B cell (primary cell): ENCODE measurements at regions of chr6 and their contacts with region 1.

Region 1: DNA sequence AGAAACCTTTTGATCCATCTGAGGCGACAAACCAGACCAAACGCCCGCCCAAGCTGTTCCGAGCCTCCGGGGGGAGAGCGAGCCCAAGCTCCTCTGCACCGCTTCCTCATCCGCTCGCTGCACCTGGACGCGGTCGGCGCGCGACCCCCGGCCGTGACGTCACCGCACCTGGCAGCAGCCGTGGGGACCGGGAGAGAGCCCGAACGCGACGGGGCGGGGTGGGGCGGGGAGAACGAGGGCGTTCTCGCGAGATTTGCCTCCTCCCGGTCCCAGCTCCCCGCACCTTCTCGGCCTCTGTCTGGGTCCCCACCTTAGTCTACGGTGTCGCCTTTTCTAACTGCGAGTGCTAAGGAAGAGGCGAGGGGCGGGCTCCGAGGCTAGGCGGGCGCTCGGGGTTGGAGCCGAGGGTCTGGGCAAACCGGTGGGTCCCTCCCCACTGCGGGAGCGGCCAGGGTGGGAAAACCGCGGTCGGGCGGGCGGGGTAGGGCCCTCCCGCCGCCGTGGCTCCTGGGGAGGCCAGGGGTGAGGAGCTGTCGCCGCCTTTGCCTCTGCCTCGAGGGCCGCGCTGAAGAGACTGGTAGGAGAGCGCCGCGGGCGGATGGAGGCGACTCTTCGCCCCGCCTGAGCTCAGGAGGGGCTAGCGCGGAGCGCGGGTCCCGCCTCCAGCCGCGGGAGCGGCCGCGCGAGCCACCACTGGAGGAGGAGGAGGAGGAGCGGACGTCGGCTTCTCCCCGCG is at the start of gene CD2AP:
- DNase-seq: peak; percentile 97
- ATAC-seq: peak; percentile 87
- H3K4me3 ChIP-seq: peak within 1 kb of the TSS; percentile 79 to 92 (median 91)
- H3K4me3 Mint-ChIP-seq: peak within 1 kb of the TSS; percentile 93
- H3K27ac ChIP-seq: peak within 1 kb of the TSS; percentile 94 to 97
- H3K27ac Mint-ChIP-seq: peak within 1 kb of the TSS; percentile 93
- H3K4me1 ChIP-seq: peaks cover 18 to 21% of the 10 kb centered on the region in 2 donors
- H3K4me1 Mint-ChIP-seq: peaks cover 35% of the 10 kb centered on the region
- H3K27me3 ChIP-seq: no peaks in the 10 kb centered on the region
- H3K27me3 Mint-ChIP-seq: no peaks in the 10 kb centered on the region
- CTCF ChIP-seq: no peak
- total RNA-seq, gene CD2AP: 43.3 and 46.9 TPM in 2 replicates

Region 2: DNA sequence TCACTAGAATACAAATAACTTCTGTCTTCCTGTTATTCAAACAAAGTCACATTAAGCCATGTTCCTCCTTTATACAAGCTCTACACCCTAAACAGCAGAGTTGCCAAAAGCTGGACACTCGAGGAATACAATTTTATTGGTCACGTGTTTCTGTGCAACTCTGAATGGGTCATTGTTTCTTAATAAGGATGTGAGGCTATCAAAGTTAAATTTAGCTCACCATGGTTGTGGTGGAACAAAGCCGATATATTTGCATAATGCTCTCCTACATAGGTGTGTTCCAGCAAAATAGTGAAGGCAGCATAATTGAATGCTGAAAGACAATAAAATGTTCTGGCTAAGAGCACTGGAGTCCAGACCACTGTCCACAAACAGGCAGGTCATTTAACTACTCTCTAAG is 36.9 kb before region 1 on chr6:
- CTCF ChIA-PET with region 1: interaction called, 4 read pairs
- POLR2A ChIA-PET with region 1: interaction called, 3 read pairs
- intact Hi-C with region 1: loop called (anchors 2 kb)
- DNase-seq: peak; percentile 53
- ATAC-seq: peak; percentile 37
- H3K4me3 ChIP-seq: no peak overlapping the region
- H3K4me3 Mint-ChIP-seq: peak overlapping the region; percentile 71
- H3K27ac ChIP-seq: no peak overlapping the region
- H3K27ac Mint-ChIP-seq: no peak overlapping the region
- H3K4me1 ChIP-seq: peaks cover 36 to 38% of the 10 kb centered on the region in 2 donors
- H3K4me1 Mint-ChIP-seq: peaks cover 40% of the 10 kb centered on the region
- H3K27me3 ChIP-seq: no peaks in the 10 kb centered on the region
- H3K27me3 Mint-ChIP-seq: no peaks in the 10 kb centered on the region
- CTCF ChIP-seq: no peak

Region 3: DNA sequence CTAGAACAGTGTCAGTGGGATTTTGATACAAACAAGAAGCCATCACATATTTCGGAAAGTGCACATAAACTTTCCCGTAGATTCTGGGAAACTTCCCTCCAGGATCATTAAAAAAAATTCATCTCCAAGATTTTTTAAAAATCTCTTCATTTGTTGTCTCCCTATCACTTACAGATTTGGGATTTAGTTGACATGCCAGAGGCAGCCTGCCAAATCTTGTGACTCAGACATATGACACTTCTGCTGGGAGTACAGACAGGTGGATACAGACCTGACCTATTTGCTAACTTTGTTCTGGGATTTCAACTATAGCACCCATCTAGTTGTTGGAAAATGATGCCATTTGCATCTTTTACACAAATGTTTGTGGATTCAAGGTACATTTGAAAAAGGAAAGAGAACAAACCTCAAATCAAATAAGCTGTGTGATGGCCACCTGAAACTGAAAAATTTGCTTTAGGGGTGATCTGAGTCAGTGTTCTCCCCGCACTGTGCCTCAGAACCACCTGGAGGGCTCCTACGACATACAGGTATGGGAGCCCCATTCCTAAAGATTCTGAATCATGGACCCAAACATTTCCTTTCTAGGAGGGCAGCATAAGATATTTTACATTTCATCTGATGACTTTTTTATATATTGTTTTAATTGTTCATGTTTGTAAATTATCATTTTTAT is 22.0 kb before region 1 on chr6:
- CTCF ChIA-PET with region 1: interaction called, 5 read pairs
- POLR2A ChIA-PET with region 1: interaction called, 19 read pairs
- intact Hi-C with region 1: no loop called
- DNase-seq: no peak
- ATAC-seq: no peak
- H3K4me3 ChIP-seq: no peak overlapping the region
- H3K4me3 Mint-ChIP-seq: no peak overlapping the region
- H3K27ac ChIP-seq: no peak overlapping the region
- H3K27ac Mint-ChIP-seq: no peak overlapping the region
- H3K4me1 ChIP-seq: peaks cover 4 to 5% of the 10 kb centered on the region in 2 donors
- H3K4me1 Mint-ChIP-seq: peaks cover 6% of the 10 kb centered on the region
- H3K27me3 ChIP-seq: no peaks in the 10 kb centered on the region
- H3K27me3 Mint-ChIP-seq: no peaks in the 10 kb centered on the region
- CTCF ChIP-seq: no peak

Region 4: GRCh38 chr6:47464052-47464451 is 13.6 kb before region 1 on chr6:
- CTCF ChIA-PET with region 1: interaction called, 5 read pairs
- POLR2A ChIA-PET with region 1: interaction called, 19 read pairs
- intact Hi-C with region 1: loop called (anchors 1 kb)
- DNase-seq: no peak
- ATAC-seq: no peak
- H3K4me3 ChIP-seq: no peak overlapping the region
- H3K4me3 Mint-ChIP-seq: no peak overlapping the region
- H3K27ac ChIP-seq: no peak overlapping the region
- H3K27ac Mint-ChIP-seq: no peak overlapping the region
- H3K4me1 ChIP-seq: peaks cover 15 to 18% of the 10 kb centered on the region in 2 donors
- H3K4me1 Mint-ChIP-seq: peaks cover 21% of the 10 kb centered on the region
- H3K27me3 ChIP-seq: no peaks in the 10 kb centered on the region
- H3K27me3 Mint-ChIP-seq: no peaks in the 10 kb centered on the region
- CTCF ChIP-seq: no peak